GM12878 (cell line): ENCODE measurements at regions of chr2 and their contacts with region 1.

Region 1: GRCh38 chr2:147910990-147911473 is 66.2 kb downstream of the ACVR2A start:
- DNase-seq: peak; percentile 21
- ATAC-seq: peak; percentile 65
- H3K4me3 ChIP-seq: no peak overlapping the region
- H3K27ac ChIP-seq: no peak overlapping the region
- H3K4me1 ChIP-seq: no peaks in the 10 kb centered on the region; the same call in 1 of the 2 replicates
- H3K27me3 ChIP-seq: no peaks in the 10 kb centered on the region
- CTCF ChIP-seq: peak; percentile 48 to 73 (median 50); a peak in 5 of 6 replicates
- EP300 ChIP-seq: no peak
- POLR2A ChIP-seq: no peak
- RAD21 ChIP-seq: peak; percentile 92

Region 2: GRCh38 chr2:146734042-146734820 is 1176.8 kb before region 1 on chr2:
- CTCF ChIA-PET with region 1: interaction called, 23 read pairs
- POLR2A ChIA-PET with region 1: no interaction called
- RAD21 ChIA-PET with region 1: interaction called, 32 read pairs
- SMC1A ChIA-PET with region 1: interaction called, 32 read pairs
- in situ Hi-C with region 1: loop called (anchors 10 kb)
- intact Hi-C with region 1: loop called (anchors 2 kb)
- DNase-seq: peak; percentile 5
- ATAC-seq: peak; percentile 95
- H3K4me3 ChIP-seq: no peak overlapping the region
- H3K27ac ChIP-seq: no peak overlapping the region
- H3K4me1 ChIP-seq: no peaks in the 10 kb centered on the region
- H3K27me3 ChIP-seq: no peaks in the 10 kb centered on the region
- CTCF ChIP-seq: peak; percentile 40 to 57 (median 40); a peak in 5 of 6 replicates
- EP300 ChIP-seq: no peak
- POLR2A ChIP-seq: no peak
- RAD21 ChIP-seq: peak; percentile 50

Region 3: GRCh38 chr2:146927080-146927711 is 983.8 kb before region 1 on chr2:
- CTCF ChIA-PET with region 1: interaction called, 23 read pairs
- POLR2A ChIA-PET with region 1: no interaction called
- RAD21 ChIA-PET with region 1: interaction called, 30 read pairs
- SMC1A ChIA-PET with region 1: interaction called, 21 read pairs
- in situ Hi-C with region 1: loop called (anchors 10 kb)
- intact Hi-C with region 1: loop called (anchors 2 kb)
- DNase-seq: no peak
- ATAC-seq: peak; percentile 86
- H3K4me3 ChIP-seq: no peak overlapping the region
- H3K27ac ChIP-seq: no peak overlapping the region
- H3K4me1 ChIP-seq: no peaks in the 10 kb centered on the region
- H3K27me3 ChIP-seq: no peaks in the 10 kb centered on the region
- CTCF ChIP-seq: peak; percentile 33 to 71 (median 57); a peak in 5 of 6 replicates
- EP300 ChIP-seq: no peak
- POLR2A ChIP-seq: no peak
- RAD21 ChIP-seq: peak; percentile 67

Region 4: DNA sequence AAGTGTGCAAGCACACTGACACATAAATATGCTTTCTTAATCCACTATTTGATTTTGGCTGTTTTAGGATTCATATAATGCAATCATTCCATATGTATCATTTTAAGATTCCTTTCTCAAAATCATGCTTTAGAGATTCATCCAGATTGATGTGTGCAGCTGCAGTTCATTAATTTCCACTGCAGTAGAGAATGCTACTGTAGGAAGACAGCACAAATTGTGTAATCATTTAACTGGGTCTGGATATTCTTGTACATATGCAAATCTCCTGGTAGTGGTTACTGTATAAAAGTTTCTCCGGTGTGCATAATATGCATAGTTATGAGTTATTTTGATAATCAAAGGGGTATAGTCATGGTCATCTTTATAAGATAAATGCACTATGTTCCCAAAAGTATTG is 568.7 kb before region 1 on chr2:
- CTCF ChIA-PET with region 1: interaction called, 11 read pairs
- POLR2A ChIA-PET with region 1: no interaction called
- RAD21 ChIA-PET with region 1: interaction called, 7 read pairs
- SMC1A ChIA-PET with region 1: interaction called, 9 read pairs
- in situ Hi-C with region 1: no loop called
- intact Hi-C with region 1: no loop called
- DNase-seq: no peak
- ATAC-seq: no peak
- H3K4me3 ChIP-seq: no peak overlapping the region
- H3K27ac ChIP-seq: no peak overlapping the region
- H3K4me1 ChIP-seq: no peaks in the 10 kb centered on the region
- H3K27me3 ChIP-seq: no peaks in the 10 kb centered on the region
- CTCF ChIP-seq: no peak
- EP300 ChIP-seq: no peak
- POLR2A ChIP-seq: no peak
- RAD21 ChIP-seq: no peak

Region 5: GRCh38 chr2:147490401-147491261 is 420.4 kb before region 1 on chr2:
- CTCF ChIA-PET with region 1: no interaction called
- POLR2A ChIA-PET with region 1: no interaction called
- RAD21 ChIA-PET with region 1: interaction called, 4 read pairs
- SMC1A ChIA-PET with region 1: no interaction called
- in situ Hi-C with region 1: no loop called
- intact Hi-C with region 1: loop called (anchors 5 kb)
- DNase-seq: no peak
- ATAC-seq: peak; percentile 70
- H3K4me3 ChIP-seq: no peak overlapping the region
- H3K27ac ChIP-seq: no peak overlapping the region
- H3K4me1 ChIP-seq: no peaks in the 10 kb centered on the region
- H3K27me3 ChIP-seq: no peaks in the 10 kb centered on the region; a peak in 1 of 4 replicates
- CTCF ChIP-seq: no peak
- EP300 ChIP-seq: no peak
- POLR2A ChIP-seq: no peak
- RAD21 ChIP-seq: no peak

Region 6: GRCh38 chr2:148161909-148162435 is 250.9 kb after region 1 on chr2:
- CTCF ChIA-PET with region 1: no interaction called
- POLR2A ChIA-PET with region 1: no interaction called
- RAD21 ChIA-PET with region 1: no interaction called
- SMC1A ChIA-PET with region 1: no interaction called
- in situ Hi-C with region 1: no loop called
- intact Hi-C with region 1: no loop called
- DNase-seq: no peak
- ATAC-seq: no peak
- H3K4me3 ChIP-seq: no peak overlapping the region
- H3K27ac ChIP-seq: no peak overlapping the region
- H3K4me1 ChIP-seq: no peaks in the 10 kb centered on the region
- H3K27me3 ChIP-seq: no peaks in the 10 kb centered on the region
- CTCF ChIP-seq: no peak
- EP300 ChIP-seq: no peak
- POLR2A ChIP-seq: no peak
- RAD21 ChIP-seq: no peak